Heart left ventricle (tissue), 16 donors: ENCODE measurements at regions of chr5 and their contacts with region 1.

Region 1: DNA sequence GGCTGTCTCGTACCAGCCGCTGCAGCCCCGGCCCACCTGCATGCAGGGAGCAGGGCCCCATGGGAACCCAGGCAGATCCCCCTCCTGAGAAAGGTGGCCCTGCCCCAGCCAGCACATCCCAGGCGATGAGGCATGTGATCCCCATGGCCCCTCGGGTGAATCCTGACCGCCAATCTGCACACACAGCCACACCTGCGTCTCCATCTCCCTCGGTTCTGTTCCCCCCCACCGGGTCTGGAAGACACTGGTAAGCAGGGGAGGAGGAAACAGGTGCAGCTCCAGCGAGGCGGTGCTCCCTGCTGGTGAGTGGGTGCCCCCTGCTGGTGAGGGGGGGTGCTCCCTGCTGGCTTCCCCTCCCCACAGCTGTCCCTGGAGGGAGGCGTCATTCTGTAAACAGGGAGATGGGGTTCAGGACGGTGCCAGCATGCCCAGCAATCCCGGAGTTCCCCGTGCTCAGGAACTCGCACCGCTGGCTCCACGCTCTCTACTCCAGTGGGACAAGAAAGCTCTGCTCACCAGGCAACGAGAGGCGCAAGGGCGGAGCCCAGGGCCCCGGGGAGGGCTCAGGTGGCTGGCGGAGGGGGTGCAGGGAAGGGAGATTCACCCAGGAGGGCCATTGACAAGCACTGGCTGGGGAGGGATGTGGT is 28.4 kb upstream of the SLC12A7 start:
- DNase-seq: peak; percentile 81 to 91 (median 84)
- ATAC-seq: peak; percentile 72 to 89 (median 78)
- H3K4me3 ChIP-seq: no peak overlapping the region
- H3K27ac ChIP-seq: no peak overlapping the region
- H3K4me1 ChIP-seq: peaks cover 0 to 30% (median 13%) of the 10 kb centered on the region in 12 donors
- H3K27me3 ChIP-seq: no peaks in the 10 kb centered on the region
- CTCF ChIP-seq: peak; percentile 86 to 97 (median 90)
- POLR2A ChIP-seq: no peak

Region 2: DNA sequence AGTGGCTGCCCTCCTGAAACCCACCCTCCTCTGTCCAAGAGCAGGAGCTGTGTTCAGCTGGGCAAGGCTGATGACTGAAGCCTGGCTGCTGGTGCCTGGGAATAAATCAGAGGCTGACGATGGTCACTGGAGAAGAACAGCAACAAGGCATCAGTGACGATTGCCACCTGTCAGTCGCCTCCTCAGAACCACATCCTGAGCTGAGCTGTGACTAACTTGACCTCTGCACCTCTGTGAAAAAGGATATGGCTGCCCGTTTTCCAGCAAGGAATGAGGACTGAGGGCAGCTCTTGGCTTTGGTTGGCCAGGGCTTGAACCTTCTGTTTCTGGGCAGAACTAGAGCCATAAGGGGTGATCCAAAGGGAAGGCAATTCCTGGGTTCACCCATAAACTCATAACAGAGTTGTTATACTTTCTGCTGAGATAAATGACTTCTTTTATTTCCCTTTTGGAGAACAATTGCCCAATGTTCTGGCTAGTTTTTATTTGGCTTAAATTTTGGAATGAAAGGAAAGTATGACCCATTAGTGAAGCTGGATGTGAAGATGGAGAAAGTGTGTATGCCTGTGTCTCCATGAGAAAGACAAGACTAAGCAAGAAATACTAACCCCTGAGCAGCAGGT is 207.6 kb before region 1 on chr5:
- intact Hi-C with region 1: loop called in 1 of 10 experiments (anchors 10 kb)
- DNase-seq: no peak
- ATAC-seq: peak in 3 of 4 donors; percentile 52 to 71 (median 58)
- H3K4me3 ChIP-seq: no peak overlapping the region
- H3K27ac ChIP-seq: peak overlapping the region in 6 of 12 donors; percentile 9 to 61 (median 32)
- H3K4me1 ChIP-seq: no peaks in the 10 kb centered on the region
- H3K27me3 ChIP-seq: peaks cover 0 to 3% (median 0%) of the 10 kb centered on the region in 9 donors
- CTCF ChIP-seq: no peak
- POLR2A ChIP-seq: no peak

Region 3: DNA sequence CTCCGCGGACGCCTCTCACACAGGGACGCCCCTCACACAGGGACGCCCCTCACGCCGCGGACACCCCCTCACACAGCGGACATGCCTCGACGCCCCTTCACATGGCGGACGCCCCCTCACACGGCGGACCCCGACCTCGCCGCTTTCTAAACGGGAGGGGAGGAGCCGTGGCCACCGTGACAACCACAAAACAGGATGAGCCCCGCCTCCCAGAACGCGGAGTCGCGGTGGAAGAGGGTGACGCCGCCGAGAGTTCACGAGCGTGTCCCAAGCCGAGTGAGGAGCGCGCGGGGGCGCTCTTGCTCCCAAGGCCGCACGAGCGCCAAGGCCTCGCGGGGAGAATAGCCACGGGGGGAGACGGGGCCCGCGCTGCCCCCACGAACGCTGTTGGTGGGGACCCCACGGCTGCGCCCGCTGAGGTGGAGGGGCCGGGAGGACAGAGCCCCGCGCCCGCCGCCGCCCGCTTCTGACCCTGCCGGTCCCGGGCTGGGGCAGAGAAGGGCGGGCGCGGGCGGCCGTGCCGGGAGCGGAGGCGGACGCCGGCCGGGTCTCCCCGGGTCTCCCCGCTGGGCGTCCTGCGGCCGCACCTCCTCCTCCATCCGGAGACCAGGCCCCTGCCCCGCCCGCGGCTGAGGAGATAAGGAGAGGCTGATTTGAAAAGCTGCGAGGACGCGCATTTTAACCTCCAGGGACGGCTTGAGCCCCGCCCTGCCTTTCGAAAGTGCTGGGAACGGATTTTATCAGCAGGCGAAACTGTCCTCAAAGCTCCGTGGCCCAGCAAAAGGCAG is 135.6 kb before region 1 on chr5:
- intact Hi-C with region 1: loop called in 6 of 10 experiments (anchors 2 to 10 kb)
- DNase-seq: peak; percentile 76 to 92 (median 88)
- ATAC-seq: peak in 3 of 4 donors; percentile 73 to 86 (median 77)
- H3K4me3 ChIP-seq: peak overlapping the region; percentile 43 to 74 (median 62)
- H3K27ac ChIP-seq: peak overlapping the region in 11 of 12 donors; percentile 11 to 78 (median 75)
- H3K4me1 ChIP-seq: peaks cover 0 to 40% (median 20%) of the 10 kb centered on the region in 12 donors
- H3K27me3 ChIP-seq: peaks cover 5 to 48% (median 8%) of the 10 kb centered on the region in 9 donors
- CTCF ChIP-seq: peak; percentile 19 to 71 (median 50)
- POLR2A ChIP-seq: no peak

Region 4: GRCh38 chr5:1052641-1053390 is 87.5 kb before region 1 on chr5:
- intact Hi-C with region 1: loop called in 4 of 10 experiments (anchors 5 to 10 kb)
- DNase-seq: peak in 4 of 5 donors; percentile 57 to 73 (median 68)
- ATAC-seq: peak; percentile 44 to 72 (median 49)
- H3K4me3 ChIP-seq: no peak overlapping the region
- H3K27ac ChIP-seq: peak overlapping the region in 9 of 12 donors; percentile 31 to 77 (median 62)
- H3K4me1 ChIP-seq: peaks cover 0 to 31% (median 13%) of the 10 kb centered on the region in 12 donors
- H3K27me3 ChIP-seq: no peaks in the 10 kb centered on the region
- CTCF ChIP-seq: peak in 7 of 12 donors; percentile 3 to 25 (median 22)
- POLR2A ChIP-seq: no peak

Region 5: DNA sequence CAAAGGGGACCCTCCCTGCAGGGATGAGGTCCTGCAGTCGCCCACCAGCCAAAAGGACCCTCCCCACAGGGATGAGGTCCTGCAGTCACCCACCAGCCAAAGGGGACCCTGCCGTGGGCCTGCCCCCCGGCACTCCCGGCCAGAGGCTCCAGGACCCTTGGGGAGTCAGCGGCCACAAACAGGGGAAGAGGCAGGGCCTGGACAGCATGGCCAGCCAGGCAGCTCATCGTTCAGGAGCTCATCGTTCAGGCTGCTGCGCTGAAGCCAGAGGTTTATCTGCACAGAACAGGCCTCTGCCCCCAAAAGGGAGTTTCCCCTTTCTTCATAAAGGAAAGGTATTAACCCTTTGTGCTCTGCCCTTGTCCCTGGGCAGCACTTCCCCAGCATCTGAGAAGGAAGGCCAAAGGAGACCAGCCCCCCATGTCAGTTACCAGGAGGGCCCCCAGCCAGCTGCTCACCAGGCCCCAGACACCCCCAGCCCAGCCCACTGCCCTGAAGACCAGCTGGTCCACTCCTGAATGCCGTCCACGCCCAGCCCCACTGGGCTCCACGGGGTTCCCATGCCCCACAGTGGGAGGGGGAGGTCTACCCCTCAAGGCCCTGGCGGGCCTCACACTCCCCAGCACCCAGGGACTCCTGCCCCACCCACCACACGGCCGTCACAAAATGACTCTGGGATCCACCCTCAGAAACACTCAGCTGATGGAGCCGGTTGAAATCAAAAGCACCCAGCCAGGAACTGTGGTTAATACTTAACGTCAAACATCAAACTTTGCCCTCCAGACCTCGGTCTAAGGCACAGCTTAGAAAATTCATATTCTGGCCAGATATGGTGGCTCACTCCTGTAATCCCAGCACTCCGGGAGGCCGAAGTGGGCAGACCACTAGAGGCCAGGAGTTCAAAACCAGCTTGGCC is 34.7 kb before region 1 on chr5:
- intact Hi-C with region 1: loop called in 1 of 10 experiments (anchors 5 kb)
- DNase-seq: no peak
- ATAC-seq: no peak
- H3K4me3 ChIP-seq: peak overlapping the region in 4 of 12 donors; percentile 4 to 50 (median 19)
- H3K27ac ChIP-seq: peak overlapping the region; percentile 85 to 99 (median 96)
- H3K4me1 ChIP-seq: peaks cover 40 to 100% (median 94%) of the 10 kb centered on the region in 12 donors
- H3K27me3 ChIP-seq: no peaks in the 10 kb centered on the region
- CTCF ChIP-seq: no peak
- POLR2A ChIP-seq: no peak